Transverse colon (tissue), 4 donors: ENCODE measurements at regions of chr4 and their contacts with region 1.

Region 1: GRCh38 chr4:105520817-105521790 is 31.3 kb upstream of the ARHGEF38 start:
- DNase-seq: peak; percentile 45
- H3K4me3 ChIP-seq: no peak overlapping the region
- H3K27ac ChIP-seq: no peak overlapping the region
- H3K4me1 ChIP-seq: no peaks in the 10 kb centered on the region
- H3K27me3 ChIP-seq: no peaks in the 10 kb centered on the region
- CTCF ChIP-seq: peak; percentile 61 to 70 (median 65)
- EP300 ChIP-seq: no peak
- POLR2A ChIP-seq: no peak

Region 2: DNA sequence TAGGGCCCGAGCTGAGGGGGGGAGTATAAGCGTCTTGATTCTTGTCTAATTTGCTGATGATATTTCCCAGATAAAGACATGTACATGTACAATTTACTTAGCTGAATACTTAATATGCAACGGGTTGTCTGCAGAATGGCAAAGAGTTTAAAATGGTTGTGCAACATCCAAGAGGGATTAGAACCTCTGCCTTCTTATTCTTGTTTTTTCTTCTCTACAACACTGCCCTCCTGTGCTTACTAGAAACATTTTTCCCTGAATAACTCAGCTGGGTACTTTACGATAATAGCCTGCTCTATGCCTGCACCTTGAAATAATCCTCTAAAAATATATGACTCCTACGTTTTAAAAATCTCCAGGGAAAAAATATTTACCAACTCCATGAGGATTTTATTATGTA is 145.6 kb after region 1 on chr4:
- in situ Hi-C with region 1: loop called in 2 of 4 experiments (anchors 10 to 25 kb)
- intact Hi-C with region 1: no loop called
- DNase-seq: no peak
- H3K4me3 ChIP-seq: no peak overlapping the region
- H3K27ac ChIP-seq: no peak overlapping the region
- H3K4me1 ChIP-seq: peaks cover 0 to 5% (median 0%) of the 10 kb centered on the region in 4 donors
- H3K27me3 ChIP-seq: no peaks in the 10 kb centered on the region
- CTCF ChIP-seq: peak in 2 of 5 experiments; percentile 22 to 23
- EP300 ChIP-seq: no peak
- POLR2A ChIP-seq: no peak